ENCODE measurements at regions of chr7 and their contacts with region 1.

Region 1: DNA sequence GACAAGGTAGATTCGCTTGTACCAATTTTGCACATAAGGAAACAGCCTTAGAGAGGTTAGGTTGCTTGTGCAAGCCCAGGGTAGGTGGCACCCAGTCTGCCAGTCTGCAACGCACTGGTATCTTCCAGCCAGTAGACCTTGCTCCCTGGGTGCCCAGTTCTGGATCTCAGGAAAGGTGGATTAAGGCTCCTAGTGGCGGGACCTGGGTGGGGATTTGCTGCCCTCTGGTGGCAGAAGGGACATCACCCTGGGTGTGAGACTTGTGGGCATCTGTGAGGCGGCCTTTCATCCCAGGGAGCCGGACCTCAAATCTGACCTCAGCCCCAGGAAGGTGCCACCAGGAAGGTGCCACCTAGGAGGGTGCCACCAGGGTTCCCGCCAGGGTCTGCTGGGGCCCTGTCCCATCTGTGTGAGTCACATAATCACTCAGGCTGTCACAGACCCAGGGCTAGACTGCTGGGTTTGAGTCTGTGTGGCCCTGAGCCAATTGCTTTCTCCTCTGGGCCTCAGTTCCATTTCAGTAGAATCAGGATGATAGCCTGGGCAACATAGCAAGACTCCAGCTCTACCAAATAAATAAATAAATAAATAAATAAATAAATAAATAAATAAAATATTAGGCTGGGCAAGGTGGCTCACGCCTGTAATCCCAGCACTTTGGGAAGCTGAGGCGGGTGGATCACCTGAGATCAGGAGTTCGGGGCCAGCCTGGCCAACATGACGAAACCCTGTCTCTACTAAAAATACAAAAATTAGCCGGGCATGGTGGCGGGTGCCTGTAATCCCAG is 5.3 kb upstream of the PRKRIP1 start:
- DNase-seq: peak; percentile 89
- H3K4me3 ChIP-seq: no peak overlapping the region
- H3K27ac ChIP-seq: no peak overlapping the region
- H3K4me1 ChIP-seq: no peaks in the 10 kb centered on the region
- H3K27me3 ChIP-seq: no peaks in the 10 kb centered on the region
- CTCF ChIP-seq: peak; percentile 90

Region 2: DNA sequence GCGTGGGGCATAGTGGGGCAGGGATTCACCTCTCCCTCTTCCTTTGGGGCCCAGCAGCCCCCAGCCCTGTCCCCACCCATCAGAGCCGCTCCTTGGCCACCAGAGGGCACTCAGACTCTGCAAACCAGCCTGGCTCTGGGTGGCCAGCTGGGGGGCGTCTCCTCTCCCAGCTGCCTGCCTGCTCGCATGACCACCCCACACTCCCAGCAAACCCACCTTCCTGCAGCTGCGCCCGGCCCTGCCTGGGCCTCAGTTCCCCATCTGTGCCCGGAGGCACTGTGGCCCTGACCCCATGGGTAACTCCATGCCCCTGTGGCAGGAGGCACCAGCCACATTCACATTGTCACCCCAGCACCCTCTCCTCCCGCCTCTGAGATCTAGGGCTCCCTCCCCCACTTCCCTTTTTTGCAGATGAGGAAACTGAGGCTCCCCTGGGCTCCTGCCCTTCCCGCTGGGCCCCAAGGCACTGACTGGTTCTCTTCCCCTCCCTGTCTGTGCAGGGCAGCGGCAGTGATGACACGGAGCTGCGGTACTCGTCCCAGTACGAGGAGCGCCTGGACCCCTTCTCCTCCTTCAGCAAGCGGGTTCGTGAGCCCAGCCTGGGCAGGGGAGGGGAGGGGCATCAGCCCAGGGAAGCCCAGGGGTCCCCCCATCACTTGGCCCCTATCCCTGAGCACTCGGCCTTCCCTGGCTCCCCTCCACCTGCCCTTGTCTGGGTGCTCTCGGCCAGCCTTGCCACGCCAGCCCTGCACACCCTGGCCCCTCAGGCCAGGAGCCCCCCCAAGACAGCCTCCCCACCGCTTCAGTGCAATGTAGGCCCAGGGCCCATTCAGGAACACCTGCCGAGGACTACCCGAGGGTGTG is 111.1 kb before region 1 on chr7:
- intact Hi-C with region 1: loop called (anchors 1 kb)
- DNase-seq: peak; percentile 51
- H3K4me3 ChIP-seq: no peak overlapping the region
- H3K27ac ChIP-seq: no peak overlapping the region
- H3K4me1 ChIP-seq: no peaks in the 10 kb centered on the region
- H3K27me3 ChIP-seq: no peaks in the 10 kb centered on the region
- CTCF ChIP-seq: peak; percentile 81

Region 3: DNA sequence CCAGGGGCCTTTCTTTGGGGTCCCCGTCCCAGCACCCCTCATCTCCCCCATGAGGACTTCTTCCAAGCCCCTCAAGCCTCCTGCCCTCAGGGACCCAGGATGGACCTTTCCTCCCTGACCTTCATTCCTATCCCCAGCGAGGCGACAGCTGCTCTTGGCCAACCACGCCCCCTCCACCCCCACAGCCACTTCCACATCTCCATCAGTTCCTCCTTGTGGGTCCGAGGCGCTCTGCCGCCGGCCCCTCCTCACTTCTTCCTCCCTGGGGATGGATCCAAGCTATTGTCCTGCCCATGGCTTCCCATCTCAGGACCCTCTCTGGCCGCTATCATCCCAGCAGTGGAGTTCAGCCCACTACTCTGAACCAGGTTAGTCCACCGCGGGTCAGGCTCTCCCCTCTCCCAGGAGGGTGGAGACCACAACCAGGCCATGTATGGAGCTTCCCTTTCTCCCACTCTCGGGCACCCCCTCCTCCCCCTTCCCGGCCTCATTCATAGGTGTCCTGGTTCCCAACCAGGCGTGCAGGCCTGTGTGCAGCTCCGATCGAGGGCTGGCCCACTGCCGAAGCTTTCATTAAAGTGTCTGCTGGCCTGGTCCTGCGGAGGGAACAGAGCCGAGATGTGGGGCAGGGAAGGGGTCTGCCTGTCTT is 105.9 kb before region 1 on chr7:
- intact Hi-C with region 1: loop called (anchors 2 kb)
- DNase-seq: peak; percentile 53
- H3K4me3 ChIP-seq: peak overlapping the region; percentile 84
- H3K27ac ChIP-seq: no peak overlapping the region
- H3K4me1 ChIP-seq: peaks cover 8% of the 10 kb centered on the region
- H3K27me3 ChIP-seq: no peaks in the 10 kb centered on the region
- CTCF ChIP-seq: no peak

Region 4: GRCh38 chr7:103059471-103059870 is 668.6 kb after region 1 on chr7:
- intact Hi-C with region 1: no loop called
- DNase-seq: no peak
- H3K4me3 ChIP-seq: no peak overlapping the region
- H3K27ac ChIP-seq: no peak overlapping the region
- H3K4me1 ChIP-seq: no peaks in the 10 kb centered on the region
- H3K27me3 ChIP-seq: no peaks in the 10 kb centered on the region
- CTCF ChIP-seq: no peak